Right lobe of liver (tissue), 6 donors: ENCODE measurements at regions of chr2 and their contacts with region 1.

Region 1: DNA sequence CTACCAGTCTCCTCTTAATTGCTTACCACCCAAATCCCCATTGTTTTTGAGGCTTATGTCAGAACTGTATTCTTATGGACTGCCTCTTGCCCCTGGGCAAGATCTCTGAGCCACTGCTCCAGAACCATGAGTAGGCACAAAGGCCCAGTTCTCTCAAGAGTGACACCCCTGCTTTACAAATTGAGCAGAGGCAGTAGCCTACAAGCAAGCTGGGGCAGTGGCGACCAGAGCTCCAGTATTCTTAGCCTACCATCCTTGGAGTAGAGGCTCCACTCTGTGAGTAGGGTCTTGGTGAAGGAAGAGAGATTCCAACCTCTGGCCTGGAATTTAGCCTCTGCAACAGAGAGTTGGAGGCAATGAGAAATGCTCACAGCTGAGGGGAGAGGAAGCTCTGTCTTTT is 36.5 kb downstream of the WDR75 start:
- DNase-seq: no peak
- ATAC-seq: peak in 1 of 4 donors; percentile 27
- H3K4me3 ChIP-seq: no peak overlapping the region
- H3K27ac ChIP-seq: no peak overlapping the region
- H3K4me1 ChIP-seq: no peaks in the 10 kb centered on the region
- H3K27me3 ChIP-seq: no peaks in the 10 kb centered on the region
- CTCF ChIP-seq: no peak
- POLR2A ChIP-seq: no peak

Region 2: DNA sequence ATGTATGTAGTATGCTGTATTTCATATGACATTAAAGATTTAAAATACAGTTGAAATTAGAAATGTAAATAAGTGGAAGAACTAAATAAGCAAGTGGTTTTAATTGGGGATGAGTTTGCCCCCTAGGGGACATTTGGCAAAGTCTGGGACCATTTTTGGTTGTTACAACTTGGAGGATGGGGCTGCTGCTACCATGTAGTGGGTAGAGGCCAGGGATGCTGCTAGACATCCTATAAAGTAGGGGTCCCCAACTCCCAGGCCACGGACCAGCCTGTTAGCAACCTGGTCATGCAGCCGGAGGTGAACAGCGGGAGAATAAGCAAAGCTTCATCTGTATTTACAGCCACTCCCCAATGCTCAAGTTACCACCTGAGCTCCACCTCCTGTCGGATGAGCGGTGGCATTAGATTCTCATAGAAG is 155.6 kb after region 1 on chr2:
- intact Hi-C with region 1: loop called in 1 of 2 experiments (anchors 10 kb)
- DNase-seq: no peak
- ATAC-seq: peak; percentile 72 to 81 (median 74)
- H3K4me3 ChIP-seq: no peak overlapping the region
- H3K27ac ChIP-seq: no peak overlapping the region
- H3K4me1 ChIP-seq: no peaks in the 10 kb centered on the region
- H3K27me3 ChIP-seq: no peaks in the 10 kb centered on the region
- CTCF ChIP-seq: peak; percentile 49 to 61 (median 56)
- POLR2A ChIP-seq: no peak